ENCODE measurements at regions of chr21 and their contacts with region 1.

Region 1: GRCh38 chr21:28229814-28230213 is 762.9 kb downstream of the LTN1 start:
- DNase-seq: peak; percentile 40
- H3K4me3 Mint-ChIP-seq: no peak overlapping the region
- H3K27ac Mint-ChIP-seq: no peak overlapping the region
- H3K4me1 Mint-ChIP-seq: peaks cover 27% of the 10 kb centered on the region
- H3K27me3 Mint-ChIP-seq: no peaks in the 10 kb centered on the region
- CTCF ChIP-seq: no peak

Region 2: GRCh38 chr21:28215214-28215954 is 14.4 kb before region 1 on chr21:
- CTCF ChIA-PET with region 1: no interaction called
- POLR2A ChIA-PET with region 1: interaction called, 12 read pairs
- intact Hi-C with region 1: no loop called
- DNase-seq: peak; percentile 87
- H3K4me3 Mint-ChIP-seq: no peak overlapping the region
- H3K27ac Mint-ChIP-seq: peak overlapping the region; percentile 77
- H3K4me1 Mint-ChIP-seq: peaks cover 8% of the 10 kb centered on the region
- H3K27me3 Mint-ChIP-seq: no peaks in the 10 kb centered on the region
- CTCF ChIP-seq: no peak

Region 3: DNA sequence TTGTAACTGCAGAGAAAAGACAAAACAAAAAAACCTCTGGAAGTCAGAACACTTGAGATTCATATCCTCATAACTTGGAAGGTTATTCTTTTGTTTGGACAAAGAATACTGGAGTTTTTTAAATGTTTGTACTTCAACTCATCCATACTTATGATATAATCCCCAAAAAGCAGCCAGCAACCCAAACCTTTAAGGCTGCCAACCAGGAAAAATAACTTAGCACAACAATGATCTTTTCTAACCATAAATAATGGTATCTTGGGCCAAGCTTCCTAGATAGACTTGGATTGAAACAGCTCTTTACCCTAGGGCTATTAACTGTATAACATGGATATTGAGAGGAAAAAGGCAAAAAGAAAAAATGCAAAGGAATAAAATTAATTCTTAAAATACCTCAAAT is 427.8 kb after region 1 on chr21:
- CTCF ChIA-PET with region 1: no interaction called
- POLR2A ChIA-PET with region 1: no interaction called
- intact Hi-C with region 1: no loop called
- DNase-seq: no peak
- H3K4me3 Mint-ChIP-seq: no peak overlapping the region
- H3K27ac Mint-ChIP-seq: no peak overlapping the region
- H3K4me1 Mint-ChIP-seq: no peaks in the 10 kb centered on the region
- H3K27me3 Mint-ChIP-seq: no peaks in the 10 kb centered on the region
- CTCF ChIP-seq: no peak

Measured in MCF 10A (cell line).